ENCODE measurements at regions of chr12 and their contacts with region 1.

Region 1: GRCh38 chr12:6470375-6471163 is at the start of gene VAMP1:
- DNase-seq: peak; percentile 97 to 98
- ATAC-seq: peak; percentile 97 to 99 (median 98)
- H3K4me3 ChIP-seq: peak within 1 kb of the TSS; percentile 60 to 78 (median 72)
- H3K27ac ChIP-seq: peak within 1 kb of the TSS; percentile 16 to 93 (median 86)
- H3K4me1 ChIP-seq: peaks cover 4 to 45% (median 21%) of the 10 kb centered on the region in 9 donors
- H3K27me3 ChIP-seq: no peaks in the 10 kb centered on the region
- CTCF ChIP-seq: peak in 2 of 9 donors; percentile 9 to 16
- total RNA-seq, gene VAMP1: 1.4 to 6.1 (median 3.0) TPM

Region 2: GRCh38 chr12:5244513-5244972 is 1226.0 kb before region 1 on chr12:
- intact Hi-C with region 1: no loop called
- DNase-seq: no peak
- ATAC-seq: peak in 7 of 8 donors; percentile 42 to 85 (median 75)
- H3K4me3 ChIP-seq: no peak overlapping the region
- H3K27ac ChIP-seq: no peak overlapping the region
- H3K4me1 ChIP-seq: peaks cover 0 to 19% (median 5%) of the 10 kb centered on the region in 9 donors
- H3K27me3 ChIP-seq: peaks cover 0 to 9% (median 0%) of the 10 kb centered on the region in 7 donors
- CTCF ChIP-seq: no peak

Region 3: DNA sequence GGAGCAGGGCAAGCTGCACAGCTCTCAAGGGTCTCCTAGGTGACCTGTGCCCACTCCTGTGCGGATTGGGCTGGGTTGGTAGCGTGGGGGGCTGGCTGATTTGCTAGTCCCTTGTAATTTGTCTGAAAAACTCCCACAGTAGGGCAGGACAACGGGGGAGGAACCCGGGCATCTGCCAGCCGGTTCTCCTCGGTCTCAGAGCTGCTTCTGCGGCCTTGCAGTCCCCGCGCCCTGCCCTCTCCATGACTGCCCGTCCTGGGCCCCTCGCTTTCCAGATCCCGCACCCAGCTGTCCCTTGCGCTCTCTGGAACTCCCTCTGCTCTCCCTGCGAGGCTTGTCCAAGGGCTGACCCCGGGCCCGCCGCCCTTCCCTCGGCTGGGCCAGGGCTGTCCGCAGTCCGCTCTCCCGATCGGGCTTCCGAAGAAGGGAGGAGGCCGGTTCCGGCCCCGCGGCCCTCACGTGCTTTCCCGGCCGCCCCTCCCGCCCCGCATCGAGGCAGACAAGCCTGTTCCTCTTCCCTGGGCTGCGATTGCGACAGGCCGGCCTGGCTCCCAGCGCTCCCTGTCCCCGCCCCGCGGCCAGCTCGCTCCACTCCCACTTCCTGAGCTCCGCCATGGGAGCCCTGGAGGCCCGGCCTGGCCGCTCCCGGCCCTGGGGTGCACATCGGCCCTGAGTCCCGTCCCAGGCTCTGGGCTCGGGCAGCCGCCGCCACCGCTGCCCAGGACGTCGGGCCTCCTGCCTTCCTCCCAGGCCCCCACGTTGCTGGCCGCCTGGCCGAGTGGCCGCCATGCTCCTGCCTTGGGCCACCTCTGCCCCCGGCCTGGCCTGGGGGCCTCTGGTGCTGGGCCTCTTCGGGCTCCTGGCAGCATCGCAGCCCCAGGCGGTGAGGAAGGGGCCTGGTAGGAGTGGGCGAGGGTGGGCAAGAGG is 86.7 kb before region 1 on chr12 and contains the start of gene LTBR:
- intact Hi-C with region 1: no loop called
- DNase-seq: peak; percentile 96 to 98
- ATAC-seq: peak; percentile 96 to 98 (median 97)
- H3K4me3 ChIP-seq: peak within 1 kb of the TSS; percentile 53 to 94 (median 82)
- H3K27ac ChIP-seq: peak within 1 kb of the TSS; percentile 63 to 98 (median 95)
- H3K4me1 ChIP-seq: peaks cover 5 to 65% (median 28%) of the 10 kb centered on the region in 9 donors
- H3K27me3 ChIP-seq: no peaks in the 10 kb centered on the region
- CTCF ChIP-seq: peak in 5 of 9 donors; percentile 15 to 48 (median 33)
- total RNA-seq, gene LTBR: 14.1 to 49.1 (median 20.8) TPM

Region 4: GRCh38 chr12:6493497-6494257 is 23.1 kb after region 1 on chr12 and contains the start of gene NCAPD2:
- intact Hi-C with region 1: loop called in 1 of 10 experiments (anchors 1 kb)
- DNase-seq: peak; percentile 93 to 94
- ATAC-seq: peak; percentile 95 to 98 (median 96)
- H3K4me3 ChIP-seq: peak within 1 kb of the TSS; percentile 60 to 98 (median 74)
- H3K27ac ChIP-seq: peak within 1 kb of the TSS; percentile 89 to 98 (median 96)
- H3K4me1 ChIP-seq: peaks cover 0 to 30% (median 26%) of the 10 kb centered on the region in 9 donors
- H3K27me3 ChIP-seq: no peaks in the 10 kb centered on the region
- CTCF ChIP-seq: peak in 7 of 9 donors; percentile 27 to 50 (median 35)
- total RNA-seq, gene NCAPD2: 8.4 to 18.8 (median 13.1) TPM

Region 5: DNA sequence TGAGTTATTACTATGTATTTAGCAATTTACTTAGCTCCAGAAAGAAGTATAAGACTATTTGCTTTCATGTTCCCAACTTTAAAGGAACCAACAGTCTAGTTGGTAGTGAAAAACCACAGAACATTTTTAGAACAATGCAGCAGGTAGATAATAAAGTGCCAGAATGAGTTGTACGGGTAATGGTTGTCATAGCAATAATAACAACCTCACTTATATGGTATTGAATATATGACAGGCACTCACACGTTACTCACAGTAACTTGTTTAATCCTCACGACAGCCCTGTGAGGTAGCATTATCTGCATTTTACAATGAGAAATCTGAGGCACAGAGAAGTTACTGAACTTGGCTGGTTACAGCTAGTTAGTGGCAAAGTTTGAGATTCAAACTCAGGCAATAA is 53.1 kb after region 1 on chr12:
- intact Hi-C with region 1: no loop called
- DNase-seq: no peak
- ATAC-seq: no peak
- H3K4me3 ChIP-seq: no peak overlapping the region
- H3K27ac ChIP-seq: no peak overlapping the region
- H3K4me1 ChIP-seq: no peaks in the 10 kb centered on the region
- H3K27me3 ChIP-seq: no peaks in the 10 kb centered on the region
- CTCF ChIP-seq: no peak

Measured in heart right ventricle (tissue), 16 donors.